HepG2 (cell line): ENCODE measurements at regions of chr11 and their contacts with region 1.

Region 1: GRCh38 chr11:2151500-2152257 is 9.3 kb downstream of the INS start:
- DNase-seq: peak; percentile 73
- ATAC-seq: peak; percentile 39
- H3K4me3 ChIP-seq: peak overlapping the region in 1 of 3 experiments; percentile 31; a peak in 1 of 6 replicates
- H3K27ac ChIP-seq: no peak overlapping the region
- H3K4me1 ChIP-seq: peaks cover 20% of the 10 kb centered on the region
- H3K27me3 ChIP-seq: peaks cover 20 to 44% of the 10 kb centered on the region in 2 experiments
- CTCF ChIP-seq: peak; percentile 86
- EP300 ChIP-seq: no peak
- POLR2A ChIP-seq: no peak
- RAD21 ChIP-seq: peak; percentile 83

Region 2: GRCh38 chr11:1640076-1640946 is 511.4 kb before region 1 on chr11:
- CTCF ChIA-PET with region 1: interaction called, 10 read pairs
- POLR2A ChIA-PET with region 1: no interaction called
- in situ Hi-C with region 1: no loop called
- intact Hi-C with region 1: no loop called
- DNase-seq: peak; percentile 24
- ATAC-seq: peak; percentile 89
- H3K4me3 ChIP-seq: no peak overlapping the region
- H3K27ac ChIP-seq: no peak overlapping the region
- H3K4me1 ChIP-seq: no peaks in the 10 kb centered on the region
- H3K27me3 ChIP-seq: peaks cover 7 to 65% of the 10 kb centered on the region in 2 experiments
- CTCF ChIP-seq: peak; percentile 88
- EP300 ChIP-seq: no peak
- POLR2A ChIP-seq: no peak
- RAD21 ChIP-seq: no peak

Region 3: GRCh38 chr11:1827095-1827813 is 324.4 kb before region 1 on chr11:
- CTCF ChIA-PET with region 1: interaction called, 56 read pairs
- POLR2A ChIA-PET with region 1: interaction called, 3 read pairs
- in situ Hi-C with region 1: no loop called
- intact Hi-C with region 1: no loop called
- DNase-seq: peak; percentile 70
- ATAC-seq: peak; percentile 14
- H3K4me3 ChIP-seq: peak overlapping the region in 1 of 3 experiments; percentile 32; a peak in 1 of 6 replicates
- H3K27ac ChIP-seq: no peak overlapping the region
- H3K4me1 ChIP-seq: peaks cover 78% of the 10 kb centered on the region
- H3K27me3 ChIP-seq: peaks cover 0 to 2% of the 10 kb centered on the region in 2 experiments; a peak in 1 of 5 replicates
- CTCF ChIP-seq: peak; percentile 23; the same call in 1 of the 2 replicates
- EP300 ChIP-seq: no peak
- POLR2A ChIP-seq: no peak
- RAD21 ChIP-seq: no peak

Region 4: DNA sequence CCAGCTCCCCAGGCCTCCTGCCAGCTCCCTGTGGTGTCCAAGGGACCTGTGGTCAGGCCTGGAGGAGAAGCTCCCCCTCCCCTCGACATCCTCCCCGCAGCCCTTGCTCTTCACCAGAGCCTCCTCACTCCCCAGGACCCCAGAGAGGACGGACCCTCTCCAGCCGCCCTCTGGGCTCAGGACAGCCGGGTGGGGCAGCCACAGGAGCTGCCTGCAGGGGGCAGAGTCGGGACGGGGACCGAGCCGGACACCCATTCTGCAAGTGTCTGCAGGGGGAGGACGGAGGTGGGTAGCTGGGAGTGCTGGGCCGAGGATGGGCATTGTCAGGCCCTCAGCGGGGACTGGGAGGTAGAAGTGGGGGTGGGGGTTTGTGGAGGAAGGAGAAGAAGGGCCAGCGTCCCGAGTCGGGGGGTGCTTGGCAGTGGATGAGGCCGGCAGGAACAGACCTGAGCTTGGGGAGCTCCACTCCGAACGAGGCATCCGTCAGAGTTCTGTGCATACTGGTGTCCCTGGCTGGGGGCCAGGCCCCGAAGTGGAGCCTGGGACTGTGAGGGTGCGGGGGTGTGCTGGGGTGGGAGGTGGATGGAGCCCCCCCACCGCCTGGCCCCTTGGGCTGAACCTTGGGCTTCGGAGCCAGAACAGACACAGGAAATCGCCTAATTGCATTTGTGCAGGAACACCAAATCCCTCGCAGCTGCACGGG is 275.2 kb before region 1 on chr11:
- CTCF ChIA-PET with region 1: interaction called, 108 read pairs
- POLR2A ChIA-PET with region 1: interaction called, 4 read pairs
- in situ Hi-C with region 1: loop called (anchors 5 kb)
- intact Hi-C with region 1: no loop called
- DNase-seq: peak; percentile 27
- ATAC-seq: peak; percentile 66
- H3K4me3 ChIP-seq: no peak overlapping the region
- H3K27ac ChIP-seq: no peak overlapping the region
- H3K4me1 ChIP-seq: peaks cover 28% of the 10 kb centered on the region
- H3K27me3 ChIP-seq: peaks cover 11 to 53% of the 10 kb centered on the region in 2 experiments; a peak in 4 of 5 replicates
- CTCF ChIP-seq: peak; percentile 83
- EP300 ChIP-seq: no peak
- POLR2A ChIP-seq: no peak
- RAD21 ChIP-seq: peak; percentile 45

Region 5: GRCh38 chr11:1953489-1954266 is 198.0 kb before region 1 on chr11:
- CTCF ChIA-PET with region 1: interaction called, 45 read pairs
- POLR2A ChIA-PET with region 1: interaction called, 5 read pairs
- in situ Hi-C with region 1: no loop called
- intact Hi-C with region 1: no loop called
- DNase-seq: no peak
- ATAC-seq: peak; percentile 30; the same call in 2 of the 3 replicates
- H3K4me3 ChIP-seq: no peak overlapping the region
- H3K27ac ChIP-seq: no peak overlapping the region
- H3K4me1 ChIP-seq: no peaks in the 10 kb centered on the region
- H3K27me3 ChIP-seq: no peaks in the 10 kb centered on the region
- CTCF ChIP-seq: no peak
- EP300 ChIP-seq: no peak
- POLR2A ChIP-seq: no peak
- RAD21 ChIP-seq: no peak

Region 6: GRCh38 chr11:2036863-2037486 is 114.7 kb before region 1 on chr11:
- CTCF ChIA-PET with region 1: interaction called, 59 read pairs
- POLR2A ChIA-PET with region 1: interaction called, 5 read pairs
- in situ Hi-C with region 1: no loop called
- intact Hi-C with region 1: no loop called
- DNase-seq: no peak
- ATAC-seq: peak; percentile 70
- H3K4me3 ChIP-seq: no peak overlapping the region
- H3K27ac ChIP-seq: no peak overlapping the region
- H3K4me1 ChIP-seq: no peaks in the 10 kb centered on the region
- H3K27me3 ChIP-seq: no peaks in the 10 kb centered on the region
- CTCF ChIP-seq: no peak
- EP300 ChIP-seq: no peak
- POLR2A ChIP-seq: no peak
- RAD21 ChIP-seq: no peak

Region 7: DNA sequence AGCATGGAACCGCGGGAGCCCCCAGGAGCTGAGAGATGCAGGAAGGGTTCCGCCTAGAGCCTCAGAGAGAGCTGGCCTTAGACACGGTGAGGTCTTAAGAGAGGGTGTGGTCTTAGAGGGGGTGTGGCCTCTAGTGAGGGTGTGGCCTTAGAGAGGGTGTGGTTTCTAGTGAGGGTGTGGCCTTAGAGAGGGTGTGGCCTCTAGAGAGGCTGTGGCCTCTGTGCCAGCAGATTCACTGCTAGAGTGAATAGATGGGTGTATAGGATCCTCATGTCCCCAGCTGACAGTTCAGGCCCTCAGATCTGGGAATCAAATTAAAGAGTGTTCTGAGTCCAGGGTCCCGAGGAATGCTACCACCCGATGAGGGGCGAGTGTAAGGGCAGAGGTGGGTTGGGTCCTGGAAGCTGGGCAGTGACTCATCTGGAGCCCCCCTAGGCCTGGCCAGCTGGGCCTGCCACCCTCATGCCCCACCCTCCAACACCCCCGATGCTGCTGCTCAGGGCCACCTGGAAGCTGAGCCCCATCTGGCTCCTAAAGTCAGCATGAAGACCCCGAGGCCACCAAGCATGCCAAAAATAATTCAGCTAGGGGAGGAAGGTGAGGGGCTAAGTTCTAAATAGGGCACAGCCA is 62.0 kb before region 1 on chr11:
- CTCF ChIA-PET with region 1: no interaction called
- POLR2A ChIA-PET with region 1: no interaction called
- in situ Hi-C with region 1: no loop called
- intact Hi-C with region 1: no loop called
- DNase-seq: peak; percentile 54
- ATAC-seq: peak; percentile 79
- H3K4me3 ChIP-seq: no peak overlapping the region
- H3K27ac ChIP-seq: no peak overlapping the region
- H3K4me1 ChIP-seq: peaks cover 16% of the 10 kb centered on the region
- H3K27me3 ChIP-seq: peaks cover 6 to 43% of the 10 kb centered on the region in 2 experiments; a peak in 4 of 5 replicates
- CTCF ChIP-seq: no peak
- EP300 ChIP-seq: no peak
- POLR2A ChIP-seq: no peak
- RAD21 ChIP-seq: no peak

Region 8: GRCh38 chr11:2666401-2666741 is 514.7 kb after region 1 on chr11:
- CTCF ChIA-PET with region 1: no interaction called
- POLR2A ChIA-PET with region 1: no interaction called
- in situ Hi-C with region 1: no loop called
- intact Hi-C with region 1: no loop called
- DNase-seq: no peak
- ATAC-seq: no peak
- H3K4me3 ChIP-seq: no peak overlapping the region
- H3K27ac ChIP-seq: no peak overlapping the region
- H3K4me1 ChIP-seq: peaks cover 87% of the 10 kb centered on the region
- H3K27me3 ChIP-seq: no peaks in the 10 kb centered on the region
- CTCF ChIP-seq: no peak
- EP300 ChIP-seq: no peak
- POLR2A ChIP-seq: 0 out of 4 replicates have a peak, but pooled peaks of 1 of the 2 experiments have one; percentile 23
- RAD21 ChIP-seq: no peak